Spleen (tissue), 13 donors: ENCODE measurements at regions of chr12 and their contacts with region 1.

Region 1: DNA sequence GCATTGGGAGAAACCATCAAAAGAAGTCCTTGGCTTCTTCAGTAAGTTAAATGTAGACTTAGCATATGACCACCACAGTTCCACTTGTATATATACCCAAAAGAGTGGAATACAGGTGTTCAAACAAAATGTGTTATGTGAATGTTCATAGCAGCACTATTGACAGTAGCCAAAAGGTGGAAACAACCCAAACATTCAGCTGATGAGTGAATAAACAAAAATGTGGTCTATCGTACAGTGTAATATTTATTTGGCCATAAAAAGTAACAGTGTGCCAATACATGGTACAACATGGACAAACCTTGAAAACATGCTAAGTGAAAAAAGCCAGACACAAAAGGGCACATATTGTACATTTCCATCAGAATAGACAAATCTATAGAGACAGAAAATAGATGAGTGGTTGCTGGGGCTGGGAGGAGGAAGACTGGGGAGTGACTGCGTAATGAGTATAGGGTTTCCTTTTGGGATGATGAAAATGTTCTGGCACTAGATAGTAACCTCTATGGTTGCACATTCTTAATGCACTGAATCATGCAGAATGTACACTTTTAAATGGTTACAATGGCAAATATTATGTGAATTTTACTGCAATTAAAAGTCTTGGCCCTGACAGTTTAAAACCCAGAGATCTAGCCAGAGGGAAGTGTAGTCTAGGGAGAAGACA is 5.5 kb downstream of the ERP29 start:
- DNase-seq: no peak
- H3K4me3 ChIP-seq: no peak overlapping the region
- H3K27ac ChIP-seq: peak overlapping the region in 1 of 8 donors; percentile 12
- H3K4me1 ChIP-seq: peaks cover 16 to 75% (median 53%) of the 10 kb centered on the region in 6 donors
- H3K27me3 ChIP-seq: no peaks in the 10 kb centered on the region
- CTCF ChIP-seq: no peak
- POLR2A ChIP-seq: no peak

Region 2: DNA sequence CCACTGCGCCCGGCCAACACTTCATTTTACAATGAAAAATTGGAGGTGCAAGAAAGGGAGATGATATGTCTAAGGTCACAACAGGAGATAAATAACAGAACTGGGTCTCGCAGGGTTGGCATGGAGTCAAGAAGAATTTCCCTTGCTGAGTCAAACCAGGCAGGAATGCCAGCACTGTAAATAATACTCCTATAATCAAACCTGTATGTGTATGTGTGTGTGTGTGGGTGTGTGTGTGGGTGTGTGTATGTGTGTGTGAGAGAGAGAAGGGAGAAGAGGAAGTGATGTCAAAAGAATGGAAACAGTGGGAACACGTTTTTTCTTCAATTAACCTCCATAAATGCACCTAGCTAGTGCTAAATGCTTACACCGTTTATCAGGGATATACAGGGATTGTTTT is 76.1 kb before region 1 on chr12:
- intact Hi-C with region 1: loop called (anchors 5 kb)
- DNase-seq: no peak
- H3K4me3 ChIP-seq: no peak overlapping the region
- H3K27ac ChIP-seq: no peak overlapping the region
- H3K4me1 ChIP-seq: peaks cover 0 to 18% (median 2%) of the 10 kb centered on the region in 6 donors
- H3K27me3 ChIP-seq: no peaks in the 10 kb centered on the region
- CTCF ChIP-seq: no peak
- POLR2A ChIP-seq: no peak